Lower leg skin (tissue), 4 donors: ENCODE measurements at regions of chr1 and their contacts with region 1.

Region 1: DNA sequence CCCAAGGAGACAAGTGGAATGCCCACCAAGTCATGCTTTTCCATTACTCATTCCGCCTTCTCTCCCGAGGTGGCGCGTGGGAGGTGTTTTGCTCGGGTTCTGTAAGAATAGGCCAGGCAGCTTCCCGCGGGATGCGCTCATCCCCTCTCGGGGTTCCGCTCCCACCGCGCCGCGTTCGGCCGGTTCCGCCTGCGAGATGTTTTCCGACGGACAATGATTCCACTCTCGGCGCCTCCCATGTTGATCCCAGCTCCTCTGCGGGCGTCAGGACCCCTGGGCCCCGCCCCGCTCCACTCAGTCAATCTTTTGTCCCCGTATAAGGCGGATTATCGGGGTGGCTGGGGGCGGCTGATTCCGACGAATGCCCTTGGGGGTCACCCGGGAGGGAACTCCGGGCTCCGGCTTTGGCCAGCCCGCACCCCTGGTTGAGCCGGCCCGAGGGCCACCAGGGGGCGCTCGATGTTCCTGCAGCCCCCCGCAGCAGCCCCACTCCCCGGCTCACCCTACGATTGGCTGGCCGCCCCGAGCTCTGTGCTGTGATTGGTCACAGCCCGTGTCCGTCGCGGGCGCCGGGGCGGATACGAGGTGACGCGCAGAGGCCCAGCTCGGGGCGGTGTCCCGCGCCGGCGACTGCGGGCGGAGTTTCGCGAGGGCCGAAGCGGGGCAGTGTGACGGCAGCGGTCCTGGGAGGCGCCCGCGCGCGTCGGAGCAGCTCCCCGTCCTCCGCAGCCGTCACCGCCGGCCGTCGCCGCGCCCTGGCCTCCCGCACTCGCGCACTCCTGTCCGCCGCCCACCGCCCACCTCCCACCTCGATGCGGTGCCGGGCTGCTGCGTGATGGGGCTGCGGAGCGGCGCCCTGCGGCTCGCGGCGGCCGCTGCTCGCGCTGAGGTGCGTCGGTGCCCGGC is at the start of gene KIF1B:
- DNase-seq: peak; percentile 97 to 100
- H3K4me3 ChIP-seq: peak within 1 kb of the TSS; percentile 70
- CTCF ChIP-seq: peak in 1 of 3 donors; percentile 98
- POLR2A ChIP-seq: peak in 1 of 2 donors; percentile 77
- total RNA-seq, gene KIF1B: 44.1 to 53.1 (median 46.0) TPM

Region 2: GRCh38 chr1:9922342-9922741 is 287.8 kb before region 1 on chr1:
- intact Hi-C with region 1: no loop called
- DNase-seq: peak in 1 of 2 donors; percentile 15
- H3K4me3 ChIP-seq: no peak overlapping the region
- CTCF ChIP-seq: no peak
- POLR2A ChIP-seq: no peak

Region 3: GRCh38 chr1:10339815-10340214 is 129.7 kb after region 1 on chr1:
- intact Hi-C with region 1: loop called (anchors 10 kb)
- DNase-seq: no peak
- H3K4me3 ChIP-seq: no peak overlapping the region
- CTCF ChIP-seq: no peak
- POLR2A ChIP-seq: no peak